ENCODE measurements at regions of chr14 and their contacts with region 1.

Region 1: GRCh38 chr14:76910371-76910890 is 84.2 kb downstream of the LRRC74A start:
- DNase-seq: peak in 1 of 7 donors; percentile 19
- H3K4me3 ChIP-seq: no peak overlapping the region
- H3K27ac ChIP-seq: no peak overlapping the region
- H3K4me1 ChIP-seq: peaks cover 7 to 10% of the 10 kb centered on the region in 2 donors
- H3K27me3 ChIP-seq: no peaks in the 10 kb centered on the region
- CTCF ChIP-seq: no peak
- POLR2A ChIP-seq: no peak

Region 2: DNA sequence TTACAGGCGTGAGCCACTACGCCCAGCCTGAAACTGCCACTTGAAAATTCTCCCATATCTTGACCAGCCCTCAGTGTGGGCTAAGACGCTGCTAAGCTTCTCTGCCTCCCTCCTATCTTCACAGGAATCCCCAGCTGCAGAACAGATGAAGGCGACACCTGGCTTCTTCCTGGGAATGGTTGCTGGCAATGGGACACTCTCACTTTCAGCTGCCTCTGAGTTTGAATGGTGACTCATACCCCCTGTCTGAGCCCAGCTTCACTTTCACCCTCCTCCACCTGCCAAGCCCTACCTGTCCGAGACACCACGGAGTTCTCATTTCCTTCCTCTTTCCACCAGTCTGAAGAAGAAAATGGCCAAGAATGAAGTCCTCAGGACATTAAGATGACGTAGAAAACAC is 167.5 kb before region 1 on chr14:
- intact Hi-C with region 1: no loop called
- DNase-seq: peak in 4 of 7 donors; percentile 40 to 68 (median 46)
- H3K4me3 ChIP-seq: no peak overlapping the region
- H3K27ac ChIP-seq: no peak overlapping the region
- H3K4me1 ChIP-seq: no peaks in the 10 kb centered on the region
- H3K27me3 ChIP-seq: no peaks in the 10 kb centered on the region
- CTCF ChIP-seq: no peak
- POLR2A ChIP-seq: no peak

Region 3: DNA sequence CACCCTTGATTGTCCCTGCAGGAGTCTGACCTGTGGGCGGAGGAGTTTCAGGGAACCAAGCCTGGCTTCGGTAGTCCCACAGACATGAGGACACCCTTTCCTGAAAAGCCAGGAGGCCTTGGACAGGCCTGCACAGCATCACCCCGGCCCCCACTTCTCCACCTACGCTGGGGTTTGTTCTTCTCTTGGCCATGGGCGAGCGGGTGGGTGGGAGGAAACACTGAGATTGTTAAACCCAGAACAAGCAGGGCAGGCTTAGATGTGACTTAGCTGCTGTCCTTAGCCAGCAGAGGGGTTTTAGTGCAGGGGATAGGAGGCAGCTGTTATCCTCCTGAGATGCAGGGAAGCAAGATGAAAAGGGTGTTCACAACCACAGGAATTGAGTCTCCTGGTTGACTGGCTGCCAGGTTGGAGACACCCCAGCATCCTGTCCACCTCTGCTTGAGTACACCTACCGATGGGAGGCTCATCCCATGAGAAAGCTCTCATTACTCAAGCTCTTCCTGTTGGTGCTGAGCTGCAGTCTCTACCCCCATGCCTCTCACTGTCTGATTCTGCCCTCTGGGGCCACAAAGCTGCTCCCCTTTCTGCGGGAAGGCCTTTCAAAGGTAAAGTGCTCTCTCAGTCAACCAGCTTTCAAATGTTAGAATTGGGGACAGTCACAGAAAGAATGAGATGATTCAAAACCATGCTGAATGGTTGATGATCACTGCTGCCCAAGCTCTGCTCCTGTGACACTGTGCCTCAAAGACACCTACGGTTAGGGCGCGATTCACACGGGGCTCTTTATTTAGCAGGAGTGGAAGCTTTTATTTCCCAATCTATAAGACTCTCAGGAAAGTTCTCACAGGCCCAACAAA is 31.7 kb after region 1 on chr14:
- intact Hi-C with region 1: no loop called
- DNase-seq: no peak
- H3K4me3 ChIP-seq: no peak overlapping the region
- H3K27ac ChIP-seq: no peak overlapping the region
- H3K4me1 ChIP-seq: peaks cover 6 to 22% of the 10 kb centered on the region in 2 donors
- H3K27me3 ChIP-seq: no peaks in the 10 kb centered on the region
- CTCF ChIP-seq: no peak
- POLR2A ChIP-seq: no peak

Region 4: DNA sequence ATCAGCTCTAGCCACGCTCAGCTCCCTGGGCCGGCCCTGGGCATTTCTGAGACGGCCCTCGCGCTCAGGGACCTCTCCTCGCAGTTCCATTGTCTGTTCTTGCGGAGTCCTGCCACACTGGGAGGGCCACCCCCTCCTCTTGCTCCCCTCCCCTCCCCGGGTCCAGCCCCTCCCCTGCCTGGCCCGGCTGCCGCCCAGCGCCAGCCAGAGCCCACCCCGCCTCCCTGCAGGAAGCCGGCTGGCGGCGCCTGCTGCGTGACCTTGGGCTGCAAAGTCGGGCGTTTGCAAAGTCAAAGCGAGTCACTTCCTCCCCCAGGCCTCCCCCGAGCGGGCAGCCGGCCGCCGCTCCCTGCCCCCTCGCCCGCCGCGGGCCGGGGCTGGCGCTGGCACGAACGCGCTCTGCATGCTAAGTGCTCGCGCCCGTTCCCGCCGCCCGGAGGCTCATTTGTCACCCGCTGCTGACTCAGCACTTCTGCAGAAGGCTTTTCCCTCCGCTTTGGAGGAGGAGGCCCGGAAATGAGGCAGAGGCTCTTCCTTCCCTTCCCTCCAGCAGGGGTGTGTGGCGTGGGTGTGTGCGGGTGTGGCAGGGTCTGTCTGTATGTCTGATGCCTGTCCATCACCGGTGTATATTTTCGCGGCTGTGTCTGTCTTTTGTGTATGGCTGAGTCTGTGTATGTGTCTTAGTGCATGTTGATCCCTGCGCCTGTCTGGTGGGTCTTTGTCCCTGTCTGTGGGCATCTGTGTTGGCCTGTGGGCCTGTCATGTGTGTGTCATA is 46.1 kb after region 1 on chr14:
- intact Hi-C with region 1: loop called (anchors 5 kb)
- DNase-seq: peak; percentile 95 to 98 (median 96)
- H3K4me3 ChIP-seq: peak overlapping the region in 1 of 4 donors; percentile 32
- H3K27ac ChIP-seq: peak overlapping the region; percentile 96 to 99 (median 97)
- H3K4me1 ChIP-seq: peaks cover 42 to 52% of the 10 kb centered on the region in 2 donors
- H3K27me3 ChIP-seq: no peaks in the 10 kb centered on the region
- CTCF ChIP-seq: peak in 4 of 6 experiments; percentile 30 to 61 (median 38)
- POLR2A ChIP-seq: peak; percentile 35 to 65

Region 5: GRCh38 chr14:77028384-77029231 is 118.2 kb after region 1 on chr14 and contains the start of gene IRF2BPL:
- intact Hi-C with region 1: loop called (anchors 5 kb)
- DNase-seq: peak; percentile 99 to 100 (median 99)
- H3K4me3 ChIP-seq: peak within 1 kb of the TSS in 3 of 4 donors; percentile 85 to 90 (median 86)
- H3K27ac ChIP-seq: peak within 1 kb of the TSS; percentile 99 to 100 (median 99)
- H3K4me1 ChIP-seq: peaks cover 52 to 66% of the 10 kb centered on the region in 2 donors
- H3K27me3 ChIP-seq: no peaks in the 10 kb centered on the region
- CTCF ChIP-seq: peak in 1 of 6 experiments; percentile 29
- POLR2A ChIP-seq: peak; percentile 95 to 98
- total RNA-seq, gene IRF2BPL: 20.3 to 104 (median 85.1) TPM

Region 6: GRCh38 chr14:77040059-77040740 is 129.8 kb after region 1 on chr14:
- intact Hi-C with region 1: no loop called
- DNase-seq: peak; percentile 99 to 100 (median 100)
- H3K4me3 ChIP-seq: peak overlapping the region in 1 of 4 donors; percentile 42
- H3K27ac ChIP-seq: peak overlapping the region; percentile 96 to 100 (median 98)
- H3K4me1 ChIP-seq: peaks cover 68 to 84% of the 10 kb centered on the region in 2 donors
- H3K27me3 ChIP-seq: no peaks in the 10 kb centered on the region
- CTCF ChIP-seq: no peak
- POLR2A ChIP-seq: peak in 1 of 2 donors; percentile 67

Region 7: GRCh38 chr14:77053046-77053841 is 142.8 kb after region 1 on chr14:
- intact Hi-C with region 1: loop called in 1 of 2 experiments (anchors 5 kb)
- DNase-seq: peak; percentile 70 to 89 (median 75)
- H3K4me3 ChIP-seq: no peak overlapping the region
- H3K27ac ChIP-seq: peak overlapping the region in 3 of 5 donors; percentile 66 to 92 (median 74)
- H3K4me1 ChIP-seq: peaks cover 8 to 29% of the 10 kb centered on the region in 2 donors
- H3K27me3 ChIP-seq: no peaks in the 10 kb centered on the region
- CTCF ChIP-seq: peak; percentile 87 to 98 (median 92)
- POLR2A ChIP-seq: peak in 1 of 2 donors; percentile 9

Region 8: DNA sequence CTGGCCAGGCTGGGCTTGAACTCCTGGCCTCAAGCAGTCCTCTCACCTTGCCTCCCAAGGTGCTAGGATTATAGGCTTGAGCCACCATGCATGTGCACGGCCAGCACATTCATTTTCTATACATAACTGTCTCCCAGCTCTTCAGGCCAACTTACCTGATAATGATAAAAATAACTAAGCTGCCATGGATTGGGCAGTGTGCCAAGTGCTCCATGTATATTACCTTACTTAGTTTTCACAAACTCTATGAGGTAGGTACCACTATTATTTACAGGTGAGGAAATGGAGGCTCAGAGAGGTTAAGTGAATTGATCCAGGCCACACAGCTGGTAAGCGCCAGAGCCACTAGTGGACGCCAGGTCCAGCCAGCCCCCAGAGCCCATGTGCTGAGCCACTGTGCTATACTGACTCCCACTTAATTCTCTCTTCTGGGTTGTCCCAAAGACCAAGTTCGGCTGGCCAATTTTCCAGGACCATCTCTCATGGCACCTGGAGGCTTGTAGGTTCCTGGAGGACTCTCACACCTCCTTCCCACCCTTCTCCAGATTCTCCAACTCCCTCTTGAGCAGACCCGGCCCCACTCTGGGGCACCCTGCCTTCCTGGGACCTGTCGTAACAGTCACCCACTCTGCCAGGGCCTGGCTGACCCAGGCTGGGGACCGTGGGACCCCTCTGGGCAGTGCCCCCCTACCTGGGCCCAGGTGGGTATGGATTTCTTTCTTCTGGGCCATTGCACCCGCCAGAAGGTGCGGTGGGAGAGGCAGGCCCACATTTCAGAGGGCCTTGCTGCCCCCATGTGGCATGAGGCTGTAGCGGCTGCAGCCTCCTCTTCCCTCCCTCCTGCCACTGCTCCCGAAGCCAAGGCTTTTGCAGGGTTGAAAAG is 157.4 kb after region 1 on chr14:
- intact Hi-C with region 1: loop called in 1 of 2 experiments (anchors 5 kb)
- DNase-seq: peak; percentile 62 to 86 (median 80)
- H3K4me3 ChIP-seq: no peak overlapping the region
- H3K27ac ChIP-seq: peak overlapping the region in 1 of 5 donors; percentile 42
- H3K4me1 ChIP-seq: peaks cover 0 to 28% of the 10 kb centered on the region in 2 donors
- H3K27me3 ChIP-seq: no peaks in the 10 kb centered on the region
- CTCF ChIP-seq: peak; percentile 66 to 93 (median 90)
- POLR2A ChIP-seq: no peak

Region 9: GRCh38 chr14:77124345-77125280 is 214.2 kb after region 1 on chr14:
- intact Hi-C with region 1: no loop called
- DNase-seq: peak; percentile 16 to 68 (median 46)
- H3K4me3 ChIP-seq: peak overlapping the region in 1 of 4 donors; percentile 57
- H3K27ac ChIP-seq: no peak overlapping the region
- H3K4me1 ChIP-seq: peaks cover 22 to 45% of the 10 kb centered on the region in 2 donors
- H3K27me3 ChIP-seq: no peaks in the 10 kb centered on the region
- CTCF ChIP-seq: peak in 3 of 6 experiments; percentile 55 to 85 (median 77)
- POLR2A ChIP-seq: no peak

Measured in adrenal gland (tissue), 19 donors.